Activated CD8-positive, alpha-beta T cell treated with anti-CD3 and anti-CD28 coated beads for 36 hours (primary cell): ENCODE measurements at regions of chr4 and their contacts with region 1.

Region 1: DNA sequence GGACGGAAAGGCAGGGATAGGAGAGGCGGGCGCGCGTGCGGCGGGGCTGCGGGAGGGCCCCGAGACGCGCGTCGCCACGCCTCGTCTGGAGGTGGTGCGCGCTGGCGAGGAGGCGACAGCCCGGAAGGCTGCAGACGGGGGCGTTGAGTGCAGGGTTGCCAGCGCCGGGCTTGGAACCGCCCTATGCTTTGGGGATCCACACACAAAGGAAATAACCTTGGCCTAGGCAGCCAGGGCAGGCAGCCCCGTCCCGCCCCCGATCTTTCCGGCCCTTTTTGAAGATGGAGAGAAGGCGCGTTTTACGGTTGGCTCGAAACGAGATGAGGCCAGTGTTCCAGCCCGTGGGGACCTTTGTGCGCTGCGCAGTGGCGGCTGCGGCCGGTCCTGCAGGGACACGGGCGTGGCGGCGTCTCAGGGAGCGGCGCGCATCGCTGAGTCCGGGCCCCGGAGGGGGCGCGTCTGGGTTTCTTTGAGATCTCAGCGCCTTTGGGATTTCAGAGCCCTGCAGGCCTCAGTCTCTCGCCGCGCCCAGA is 50.8 kb upstream of the TRIM2 start:
- DNase-seq: peak; percentile 87
- ATAC-seq: peak; percentile 90
- H3K4me3 Mint-ChIP-seq: peak overlapping the region; percentile 72
- H3K27ac Mint-ChIP-seq: peak overlapping the region; percentile 66
- H3K4me1 Mint-ChIP-seq: peaks cover 40% of the 10 kb centered on the region
- H3K27me3 Mint-ChIP-seq: peaks cover 24% of the 10 kb centered on the region
- CTCF ChIP-seq: no peak

Region 2: GRCh38 chr4:153204247-153205027 is 51.0 kb after region 1 on chr4 and contains the start of gene TRIM2:
- CTCF ChIA-PET with region 1: no interaction called
- POLR2A ChIA-PET with region 1: no interaction called
- intact Hi-C with region 1: loop called (anchors 5 kb)
- DNase-seq: peak; percentile 10
- ATAC-seq: no peak
- H3K4me3 Mint-ChIP-seq: peak within 1 kb of the TSS; percentile 28
- H3K27ac Mint-ChIP-seq: peak within 1 kb of the TSS; percentile 58
- H3K4me1 Mint-ChIP-seq: peaks cover 32% of the 10 kb centered on the region
- H3K27me3 Mint-ChIP-seq: peaks cover 12% of the 10 kb centered on the region
- CTCF ChIP-seq: no peak
- total RNA-seq, gene TRIM2: 0.63 to 1.4 TPM